BJ (cell line): ENCODE measurements at regions of chr3 and their contacts with region 1.

Region 1: GRCh38 chr3:151439652-151440129 is 21.2 kb downstream of the IGSF10 start:
- DNase-seq: peak; percentile 13
- H3K4me3 ChIP-seq: no peak overlapping the region
- H3K27me3 ChIP-seq: no peaks in the 10 kb centered on the region
- CTCF ChIP-seq: peak; percentile 70

Region 2: DNA sequence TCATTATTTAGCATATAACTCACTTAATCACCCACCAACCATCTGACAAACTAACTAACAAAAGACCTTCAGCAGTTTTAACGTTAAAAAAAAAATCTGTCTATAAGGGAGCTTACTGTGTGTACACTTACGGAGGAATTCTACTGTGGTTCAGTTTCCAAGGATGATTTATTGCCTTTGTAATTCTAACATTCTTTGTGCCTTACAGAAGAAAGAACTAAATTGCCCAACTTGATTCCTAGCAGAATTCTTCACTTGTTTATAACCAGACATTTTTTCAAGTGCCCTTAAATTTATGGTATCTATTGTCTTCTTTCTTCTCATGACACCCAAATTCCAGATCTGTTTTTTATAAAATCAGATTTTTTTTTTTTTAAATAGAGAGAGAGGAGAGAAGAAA is 140.9 kb after region 1 on chr3:
- CTCF ChIA-PET with region 1: no interaction called
- POLR2A ChIA-PET with region 1: no interaction called
- DNase-seq: peak; percentile 62
- H3K4me3 ChIP-seq: no peak overlapping the region
- H3K27me3 ChIP-seq: no peaks in the 10 kb centered on the region
- CTCF ChIP-seq: no peak

Region 3: GRCh38 chr3:151816091-151816604 is 376.5 kb after region 1 on chr3:
- CTCF ChIA-PET with region 1: no interaction called
- POLR2A ChIA-PET with region 1: no interaction called
- DNase-seq: no peak
- H3K4me3 ChIP-seq: no peak overlapping the region
- H3K27me3 ChIP-seq: no peaks in the 10 kb centered on the region
- CTCF ChIP-seq: no peak

Region 4: GRCh38 chr3:151838583-151839312 is 399.1 kb after region 1 on chr3:
- CTCF ChIA-PET with region 1: interaction called, 44 read pairs
- POLR2A ChIA-PET with region 1: no interaction called
- DNase-seq: no peak
- H3K4me3 ChIP-seq: no peak overlapping the region
- H3K27me3 ChIP-seq: no peaks in the 10 kb centered on the region
- CTCF ChIP-seq: peak; percentile 77

Region 5: DNA sequence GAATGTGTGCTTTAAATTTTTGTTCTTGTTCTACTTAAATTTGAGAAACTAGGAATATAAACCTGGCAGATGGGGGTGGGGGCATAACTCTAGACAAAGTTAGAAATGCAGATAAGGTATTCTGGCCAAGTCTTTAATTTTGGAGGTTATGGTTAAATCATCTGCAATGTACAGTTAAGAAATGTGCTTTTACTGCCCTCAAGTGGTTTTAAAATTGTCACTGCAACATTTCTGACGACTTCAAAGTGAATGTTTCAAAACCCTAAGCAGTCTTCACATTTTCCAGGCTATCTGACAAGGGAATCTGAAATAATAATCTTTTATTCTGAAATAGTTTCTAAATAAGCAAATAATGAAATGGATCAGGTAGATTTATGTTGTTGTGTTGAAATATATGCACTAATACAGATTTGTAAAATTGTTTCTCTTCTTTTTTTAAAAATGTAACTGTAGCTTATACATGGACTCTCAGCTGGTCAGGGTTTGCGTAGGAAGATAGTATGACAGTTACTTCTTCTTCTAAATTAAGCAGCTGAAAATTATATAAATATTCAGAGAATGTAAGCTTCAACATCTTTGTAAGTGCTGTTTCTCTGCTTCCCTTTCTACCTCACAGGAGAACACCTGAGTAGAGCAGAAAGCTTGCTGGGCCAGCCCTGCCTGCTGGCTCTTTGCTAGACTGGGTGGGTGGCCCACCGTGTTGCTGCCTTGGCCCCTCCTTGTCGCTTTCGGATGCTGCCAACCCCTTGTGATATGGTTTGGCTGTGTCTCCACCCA is 478.8 kb after region 1 on chr3:
- CTCF ChIA-PET with region 1: interaction called, 25 read pairs
- POLR2A ChIA-PET with region 1: no interaction called
- DNase-seq: no peak
- H3K4me3 ChIP-seq: no peak overlapping the region
- H3K27me3 ChIP-seq: no peaks in the 10 kb centered on the region
- CTCF ChIP-seq: peak; percentile 54